Calu3 (cell line): ENCODE measurements at regions of chr6 and their contacts with region 1.

Region 1: GRCh38 chr6:49198015-49198414 is 265.0 kb downstream of the MMUT start:
- DNase-seq: no peak
- H3K4me3 Mint-ChIP-seq: no peak overlapping the region
- H3K27ac Mint-ChIP-seq: no peak overlapping the region
- H3K4me1 Mint-ChIP-seq: no peaks in the 10 kb centered on the region
- H3K27me3 Mint-ChIP-seq: no peaks in the 10 kb centered on the region
- CTCF ChIP-seq: no peak

Region 2: GRCh38 chr6:49409951-49410542 is 212.0 kb after region 1 on chr6:
- CTCF ChIA-PET with region 1: no interaction called
- intact Hi-C with region 1: loop called (anchors 10 kb)
- DNase-seq: peak; percentile 80
- H3K4me3 Mint-ChIP-seq: no peak overlapping the region
- H3K27ac Mint-ChIP-seq: no peak overlapping the region
- H3K4me1 Mint-ChIP-seq: peaks cover 8% of the 10 kb centered on the region
- H3K27me3 Mint-ChIP-seq: no peaks in the 10 kb centered on the region
- CTCF ChIP-seq: peak; percentile 81